Activated B cell treated with CpG ODN at 0.5 μM for 24 hours (primary cell): ENCODE measurements at regions of chr19 and their contacts with region 1.

Region 1: GRCh38 chr19:10717356-10718204 is at the start of gene DNM2:
- DNase-seq: peak; percentile 92
- ATAC-seq: peak; percentile 86
- H3K4me3 Mint-ChIP-seq: peak within 1 kb of the TSS; percentile 91
- H3K27ac Mint-ChIP-seq: peak within 1 kb of the TSS; percentile 80
- H3K4me1 Mint-ChIP-seq: peaks cover 51% of the 10 kb centered on the region
- H3K27me3 Mint-ChIP-seq: no peaks in the 10 kb centered on the region
- CTCF ChIP-seq: no peak
- total RNA-seq, gene DNM2: 220 and 257 TPM in 2 replicates

Region 2: GRCh38 chr19:10517760-10518443 is 199.7 kb before region 1 on chr19:
- CTCF ChIA-PET with region 1: no interaction called
- POLR2A ChIA-PET with region 1: no interaction called
- intact Hi-C with region 1: no loop called
- DNase-seq: peak; percentile 21
- ATAC-seq: peak; percentile 34
- H3K4me3 Mint-ChIP-seq: peak overlapping the region; percentile 28
- H3K27ac Mint-ChIP-seq: no peak overlapping the region
- H3K4me1 Mint-ChIP-seq: peaks cover 33% of the 10 kb centered on the region
- H3K27me3 Mint-ChIP-seq: peaks cover 50% of the 10 kb centered on the region
- CTCF ChIP-seq: no peak

Region 3: GRCh38 chr19:10730923-10731322 is 13.3 kb after region 1 on chr19:
- CTCF ChIA-PET with region 1: interaction called, 11 read pairs
- POLR2A ChIA-PET with region 1: interaction called, 4 read pairs
- intact Hi-C with region 1: loop called (anchors 1 kb)
- DNase-seq: no peak
- ATAC-seq: peak; percentile 20
- H3K4me3 Mint-ChIP-seq: peak overlapping the region; percentile 24
- H3K27ac Mint-ChIP-seq: peak overlapping the region; percentile 91
- H3K4me1 Mint-ChIP-seq: peaks cover 65% of the 10 kb centered on the region
- H3K27me3 Mint-ChIP-seq: no peaks in the 10 kb centered on the region
- CTCF ChIP-seq: no peak

Region 4: DNA sequence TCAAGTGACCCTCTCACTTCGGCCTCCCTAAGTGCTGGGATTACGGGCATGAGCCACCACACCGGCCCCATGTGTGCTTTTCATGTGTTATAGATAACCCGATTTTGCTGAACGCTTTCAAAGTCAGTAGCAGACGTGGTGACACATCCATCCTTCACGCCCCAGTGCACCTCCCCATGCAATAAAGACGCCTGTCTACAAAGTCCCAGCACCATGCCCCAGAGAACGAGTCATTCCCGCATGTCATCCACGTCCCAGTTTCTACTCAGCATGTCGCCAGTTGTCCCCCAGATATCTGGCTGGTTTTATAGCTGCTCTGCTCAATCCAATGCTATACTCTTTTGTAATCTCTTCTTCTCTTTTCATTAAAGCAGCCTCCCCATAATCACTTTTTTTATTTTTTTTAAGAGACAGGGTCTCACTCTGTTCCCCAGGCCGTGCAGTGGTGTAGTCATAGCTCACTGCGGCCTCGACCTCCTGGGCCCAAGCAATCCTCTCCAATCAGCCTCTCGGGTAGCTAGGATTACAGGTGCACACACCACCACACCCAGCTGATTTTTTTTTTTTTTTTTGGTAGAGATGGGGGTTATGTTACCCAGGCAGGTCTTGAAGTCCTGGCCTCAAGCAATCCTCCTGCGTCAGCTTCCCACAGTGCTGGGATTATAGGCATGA is 42.8 kb after region 1 on chr19:
- CTCF ChIA-PET with region 1: interaction called, 9 read pairs
- POLR2A ChIA-PET with region 1: interaction called, 26 read pairs
- intact Hi-C with region 1: loop called (anchors 1 kb)
- DNase-seq: peak; percentile 57
- ATAC-seq: peak; percentile 69
- H3K4me3 Mint-ChIP-seq: peak overlapping the region; percentile 77
- H3K27ac Mint-ChIP-seq: peak overlapping the region; percentile 94
- H3K4me1 Mint-ChIP-seq: peaks cover 87% of the 10 kb centered on the region
- H3K27me3 Mint-ChIP-seq: no peaks in the 10 kb centered on the region
- CTCF ChIP-seq: no peak

Region 5: GRCh38 chr19:10776900-10777650 is 59.5 kb after region 1 on chr19:
- CTCF ChIA-PET with region 1: interaction called, 14 read pairs
- POLR2A ChIA-PET with region 1: interaction called, 10 read pairs
- intact Hi-C with region 1: loop called (anchors 1 kb)
- DNase-seq: no peak
- ATAC-seq: peak; percentile 82
- H3K4me3 Mint-ChIP-seq: peak overlapping the region; percentile 2
- H3K27ac Mint-ChIP-seq: peak overlapping the region; percentile 64
- H3K4me1 Mint-ChIP-seq: peaks cover 46% of the 10 kb centered on the region
- H3K27me3 Mint-ChIP-seq: no peaks in the 10 kb centered on the region
- CTCF ChIP-seq: no peak

Region 6: GRCh38 chr19:10835754-10836477 is 118.3 kb after region 1 on chr19 and contains the start of gene TMED1:
- CTCF ChIA-PET with region 1: interaction called, 14 read pairs
- POLR2A ChIA-PET with region 1: interaction called, 43 read pairs
- intact Hi-C with region 1: loop called (anchors 1 kb)
- DNase-seq: peak; percentile 86
- ATAC-seq: peak; percentile 87
- H3K4me3 Mint-ChIP-seq: peak within 1 kb of the TSS; percentile 97
- H3K27ac Mint-ChIP-seq: peak within 1 kb of the TSS; percentile 99
- H3K4me1 Mint-ChIP-seq: peaks cover 18% of the 10 kb centered on the region
- H3K27me3 Mint-ChIP-seq: no peaks in the 10 kb centered on the region
- CTCF ChIP-seq: no peak
- total RNA-seq, gene TMED1: 11.9 and 15.7 TPM in 2 replicates

Region 7: DNA sequence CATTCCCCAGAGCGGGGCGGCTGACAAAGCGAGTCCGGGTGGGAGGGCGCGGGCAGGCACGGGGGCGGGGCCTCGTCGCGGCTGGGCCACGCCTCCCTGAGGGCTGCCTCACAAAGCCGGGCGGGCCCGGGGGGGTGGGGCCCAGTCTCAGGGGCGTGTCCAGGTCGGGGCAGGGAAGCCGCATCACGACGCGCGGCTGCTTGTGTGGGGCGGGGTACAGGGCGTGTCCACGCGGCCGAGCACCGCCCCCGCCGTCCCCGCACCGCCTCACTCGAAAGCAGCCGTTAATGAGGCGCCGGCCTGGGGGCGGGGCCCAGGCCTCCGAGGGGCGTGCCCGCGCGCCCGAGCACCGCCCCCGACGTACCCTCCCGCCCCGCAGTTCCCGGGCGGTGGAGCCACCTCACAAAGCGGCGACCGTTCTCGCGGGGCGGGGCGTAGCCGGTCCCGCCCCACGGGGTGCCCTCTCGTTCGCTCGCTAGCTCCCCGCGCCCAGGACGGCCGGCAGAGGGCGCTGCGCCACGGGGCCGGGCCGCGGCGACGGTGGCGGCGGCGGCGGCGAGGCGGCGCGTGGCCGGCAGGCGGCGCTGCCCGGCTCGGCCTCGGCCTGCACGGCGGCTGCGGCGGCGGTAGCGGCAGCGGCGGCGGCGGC is 153.5 kb after region 1 on chr19 and contains the start of gene CARM1:
- CTCF ChIA-PET with region 1: interaction called, 53 read pairs
- POLR2A ChIA-PET with region 1: interaction called, 30 read pairs
- intact Hi-C with region 1: loop called (anchors 1 kb)
- DNase-seq: peak; percentile 100
- ATAC-seq: peak; percentile 84
- H3K4me3 Mint-ChIP-seq: peak within 1 kb of the TSS; percentile 83
- H3K27ac Mint-ChIP-seq: peak within 1 kb of the TSS; percentile 88
- H3K4me1 Mint-ChIP-seq: peaks cover 44% of the 10 kb centered on the region
- H3K27me3 Mint-ChIP-seq: no peaks in the 10 kb centered on the region
- CTCF ChIP-seq: no peak
- total RNA-seq, gene CARM1: 32.3 and 39.1 TPM in 2 replicates